Tibial artery (tissue), 4 donors: ENCODE measurements at regions of chr13 and their contacts with region 1.

Region 1: DNA sequence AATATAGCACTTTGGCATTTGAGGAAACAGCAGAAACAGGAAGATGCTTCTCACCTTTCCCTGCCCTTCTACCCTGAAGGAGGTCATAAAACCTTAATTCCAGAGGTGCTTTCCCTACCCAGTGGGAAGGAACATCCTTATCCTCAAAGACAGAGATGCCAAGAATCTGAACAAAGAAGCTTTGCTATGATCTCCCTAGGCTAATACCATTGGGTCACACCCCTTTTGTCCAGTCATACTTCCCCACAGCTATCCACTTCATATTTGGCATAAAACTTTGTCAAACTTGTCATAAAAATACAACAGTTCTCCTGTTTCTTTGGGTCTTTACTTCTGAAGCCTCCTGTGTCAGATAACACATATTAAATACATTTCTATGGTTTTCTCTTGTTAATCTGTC is 21.7 kb upstream of the RXFP2 start:
- DNase-seq: no peak
- H3K4me3 ChIP-seq: no peak overlapping the region
- H3K27ac ChIP-seq: no peak overlapping the region
- H3K4me1 ChIP-seq: no peaks in the 10 kb centered on the region
- H3K27me3 ChIP-seq: peaks cover 0 to 4% of the 10 kb centered on the region in 2 donors
- CTCF ChIP-seq: no peak

Region 2: GRCh38 chr13:31452525-31452924 is 265.1 kb before region 1 on chr13:
- intact Hi-C with region 1: loop called (anchors 10 kb)
- DNase-seq: no peak
- H3K4me3 ChIP-seq: no peak overlapping the region
- H3K27ac ChIP-seq: no peak overlapping the region
- H3K4me1 ChIP-seq: no peaks in the 10 kb centered on the region
- H3K27me3 ChIP-seq: no peaks in the 10 kb centered on the region
- CTCF ChIP-seq: no peak

Region 3: DNA sequence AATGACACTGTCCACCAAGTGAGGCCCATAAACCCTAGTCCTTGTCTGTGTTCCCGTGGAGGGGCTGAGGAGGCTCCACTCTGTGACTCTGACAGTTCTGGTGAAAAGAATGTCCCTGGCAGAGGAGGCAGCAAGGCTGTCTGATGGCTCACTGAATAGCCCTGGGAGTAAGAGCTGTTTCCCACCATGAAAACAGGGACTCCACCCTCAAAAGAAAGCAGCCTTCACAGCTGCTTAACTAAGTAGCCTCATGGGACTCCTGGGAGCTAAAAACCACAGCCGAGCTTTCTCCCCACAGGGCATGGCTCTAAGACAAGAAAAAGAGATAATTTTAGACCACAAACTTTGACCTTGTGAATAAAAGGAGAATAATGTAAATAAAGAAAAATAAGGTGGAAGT is 178.8 kb after region 1 on chr13:
- intact Hi-C with region 1: no loop called
- DNase-seq: peak; percentile 48 to 76
- H3K4me3 ChIP-seq: no peak overlapping the region
- H3K27ac ChIP-seq: peak overlapping the region; percentile 73 to 75
- H3K4me1 ChIP-seq: peaks cover 0 to 68% (median 35%) of the 10 kb centered on the region in 4 donors
- H3K27me3 ChIP-seq: no peaks in the 10 kb centered on the region
- CTCF ChIP-seq: no peak

Region 4: GRCh38 chr13:32045982-32046785 is 328.6 kb after region 1 on chr13:
- intact Hi-C with region 1: no loop called
- DNase-seq: no peak
- H3K4me3 ChIP-seq: no peak overlapping the region
- H3K27ac ChIP-seq: peak overlapping the region; percentile 42 to 45
- H3K4me1 ChIP-seq: peaks cover 0 to 55% (median 26%) of the 10 kb centered on the region in 4 donors
- H3K27me3 ChIP-seq: no peaks in the 10 kb centered on the region
- CTCF ChIP-seq: no peak